Colonic mucosa (tissue), 4 donors: ENCODE measurements at regions of chr1 and their contacts with region 1.

Region 1: GRCh38 chr1:3483801-3484444 is 29.5 kb downstream of the ARHGEF16 start:
- DNase-seq: peak; percentile 67
- H3K4me3 ChIP-seq: no peak overlapping the region
- H3K27ac ChIP-seq: no peak overlapping the region
- H3K4me1 ChIP-seq: no peaks in the 10 kb centered on the region
- H3K27me3 ChIP-seq: no peaks in the 10 kb centered on the region
- CTCF ChIP-seq: peak; percentile 90

Region 2: GRCh38 chr1:3453203-3453761 is 30.6 kb before region 1 on chr1:
- intact Hi-C with region 1: loop called (anchors 1 kb)
- DNase-seq: peak; percentile 88
- H3K4me3 ChIP-seq: no peak overlapping the region
- H3K27ac ChIP-seq: no peak overlapping the region
- H3K4me1 ChIP-seq: peaks cover 33% of the 10 kb centered on the region
- H3K27me3 ChIP-seq: peaks cover 10% of the 10 kb centered on the region
- CTCF ChIP-seq: peak; percentile 96